Kidney (tissue), 22 donors: ENCODE measurements at regions of chr9 and their contacts with region 1.

Region 1: DNA sequence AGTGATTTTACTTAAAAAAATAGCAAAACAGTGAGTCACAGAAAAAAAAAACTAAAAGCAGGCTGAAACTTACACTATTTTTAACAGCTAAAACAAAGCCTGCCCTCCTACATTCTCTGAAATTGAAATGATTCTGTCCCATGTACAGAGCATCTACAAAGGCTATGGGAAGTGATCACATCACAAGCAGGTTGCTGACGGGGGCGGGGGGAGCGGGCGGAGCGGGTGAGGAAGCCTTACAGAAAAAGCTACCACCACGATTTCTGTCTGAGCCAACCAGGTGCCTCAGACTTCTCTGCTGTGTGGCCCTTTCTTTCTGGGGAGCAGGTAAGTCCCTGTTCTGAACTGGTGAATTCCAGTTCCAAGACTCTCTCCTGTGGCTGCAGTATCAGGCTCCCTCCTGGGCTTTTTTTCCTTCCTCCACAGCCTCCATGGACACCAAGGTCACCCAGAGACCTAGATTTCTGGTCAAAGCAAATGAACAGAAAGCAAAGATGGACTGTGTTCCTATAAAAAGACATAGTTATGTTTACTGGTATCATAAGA is 104.9 kb downstream of the ANKRD18B start:
- DNase-seq: no peak
- H3K4me3 ChIP-seq: no peak overlapping the region
- H3K27ac ChIP-seq: no peak overlapping the region
- H3K4me1 ChIP-seq: peaks cover 0 to 2% (median 0%) of the 10 kb centered on the region in 3 donors
- H3K27me3 ChIP-seq: no peaks in the 10 kb centered on the region
- CTCF ChIP-seq: no peak

Region 2: GRCh38 chr9:33124751-33125381 is 504.1 kb before region 1 on chr9:
- intact Hi-C with region 1: no loop called
- DNase-seq: peak in 1 of 5 donors; percentile 53
- H3K4me3 ChIP-seq: no peak overlapping the region
- H3K27ac ChIP-seq: no peak overlapping the region
- H3K4me1 ChIP-seq: peaks cover 0 to 33% (median 26%) of the 10 kb centered on the region in 3 donors
- H3K27me3 ChIP-seq: no peaks in the 10 kb centered on the region
- CTCF ChIP-seq: peak; percentile 5

Region 3: DNA sequence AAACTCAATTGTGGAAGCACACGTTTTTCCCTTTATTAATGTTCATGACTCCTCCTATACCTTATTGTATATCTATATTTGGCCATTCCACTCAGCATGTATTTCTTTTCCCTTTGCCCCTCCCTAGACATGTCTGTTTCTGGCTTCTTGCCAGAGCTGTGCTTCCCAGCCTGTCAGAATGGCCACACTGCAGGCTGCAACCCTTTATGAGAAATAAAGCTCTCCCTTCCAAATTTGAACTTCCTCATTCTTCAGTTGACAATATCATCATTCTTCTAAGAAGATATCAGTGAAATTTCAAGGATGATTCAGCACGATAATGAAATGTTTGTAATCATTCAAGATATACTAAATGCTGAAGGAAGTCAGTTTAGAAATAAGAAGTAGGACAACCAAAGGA is 58.8 kb after region 1 on chr9:
- intact Hi-C with region 1: no loop called
- DNase-seq: peak in 1 of 5 donors; percentile 43
- H3K4me3 ChIP-seq: no peak overlapping the region
- H3K27ac ChIP-seq: no peak overlapping the region
- H3K4me1 ChIP-seq: no peaks in the 10 kb centered on the region
- H3K27me3 ChIP-seq: no peaks in the 10 kb centered on the region
- CTCF ChIP-seq: no peak

Region 4: DNA sequence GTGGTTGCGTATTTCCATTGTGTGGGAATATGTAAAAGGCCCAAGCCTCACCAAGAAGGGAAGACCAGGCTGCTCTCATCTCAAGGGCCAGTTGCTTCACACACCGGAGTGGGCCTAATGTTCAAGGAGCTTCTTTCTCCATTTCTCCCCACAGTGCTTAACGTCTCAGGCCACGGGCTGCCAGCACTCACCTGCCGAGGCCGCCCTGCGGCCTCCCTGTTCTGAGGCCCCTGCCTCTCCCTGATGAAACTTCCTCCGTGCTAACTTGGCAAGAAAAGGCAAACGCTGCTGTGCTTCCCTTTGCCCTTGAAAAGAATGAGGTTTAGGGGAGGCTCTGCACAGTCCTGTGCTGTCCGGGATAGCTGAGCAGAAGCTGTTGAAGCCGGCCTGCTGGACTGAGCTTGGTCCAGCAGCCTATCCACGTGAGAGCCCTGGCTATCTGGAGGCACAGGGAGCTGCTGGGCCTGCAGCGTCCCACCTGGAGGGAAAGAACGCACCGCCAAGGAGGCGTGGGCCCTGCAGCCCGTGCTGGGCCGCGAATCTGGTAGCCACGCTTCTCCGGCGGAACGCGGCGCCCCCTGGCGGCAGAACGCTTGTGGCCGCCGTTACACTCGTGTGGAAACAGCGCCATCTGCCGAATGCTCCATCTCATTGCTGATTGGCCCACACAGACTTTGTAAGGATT is 92.9 kb after region 1 on chr9:
- intact Hi-C with region 1: loop called (anchors 5 kb)
- DNase-seq: peak; percentile 86 to 92 (median 90)
- H3K4me3 ChIP-seq: no peak overlapping the region
- H3K27ac ChIP-seq: no peak overlapping the region
- H3K4me1 ChIP-seq: peaks cover 0 to 6% (median 0%) of the 10 kb centered on the region in 3 donors
- H3K27me3 ChIP-seq: no peaks in the 10 kb centered on the region
- CTCF ChIP-seq: peak; percentile 100